IMR-90 (cell line): ENCODE measurements at regions of chr5 and their contacts with region 1.

Region 1: DNA sequence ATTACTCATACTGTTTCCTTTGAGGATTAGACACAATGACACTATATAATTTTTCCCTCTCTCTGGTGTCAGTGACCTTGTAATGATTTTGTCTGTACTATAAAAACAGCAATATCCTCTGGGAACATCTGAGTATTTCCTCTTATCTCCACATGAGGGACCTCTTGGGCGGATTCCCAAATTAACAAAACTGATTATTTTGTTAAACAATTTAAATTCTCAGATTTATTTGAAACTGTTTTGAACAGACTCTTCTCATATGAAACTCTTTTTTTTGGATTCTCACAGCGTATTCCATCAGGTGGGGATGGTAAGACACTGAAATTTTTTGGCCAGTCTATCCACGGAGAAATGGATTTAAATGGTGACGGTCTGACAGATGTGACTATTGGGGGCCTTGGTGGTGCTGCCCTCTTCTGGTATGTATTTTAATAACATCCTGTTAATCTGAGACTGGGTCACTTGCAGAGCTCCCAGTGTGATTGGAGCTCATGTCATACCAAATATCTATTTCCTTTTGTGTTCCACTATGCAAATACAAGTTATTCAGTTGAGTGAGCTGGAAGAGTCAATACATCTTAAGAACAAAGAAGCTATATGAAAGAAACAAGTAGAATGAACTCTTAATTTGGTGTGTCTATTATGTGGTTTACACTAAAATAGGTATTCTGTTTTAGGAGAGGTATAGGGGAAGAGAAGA is 73.8 kb upstream of the ITGA2 start:
- DNase-seq: peak; percentile 75
- ATAC-seq: peak; percentile 96
- H3K4me3 ChIP-seq: peak overlapping the region; percentile 10; the same call in 1 of the 2 replicates
- H3K27ac ChIP-seq: no peak overlapping the region
- H3K4me1 ChIP-seq: no peaks in the 10 kb centered on the region; the same call in 1 of the 2 replicates
- H3K27me3 ChIP-seq: no peaks in the 10 kb centered on the region
- CTCF ChIP-seq: peak; percentile 63
- POLR2A ChIP-seq: no peak
- RAD21 ChIP-seq: peak; percentile 70

Region 2: DNA sequence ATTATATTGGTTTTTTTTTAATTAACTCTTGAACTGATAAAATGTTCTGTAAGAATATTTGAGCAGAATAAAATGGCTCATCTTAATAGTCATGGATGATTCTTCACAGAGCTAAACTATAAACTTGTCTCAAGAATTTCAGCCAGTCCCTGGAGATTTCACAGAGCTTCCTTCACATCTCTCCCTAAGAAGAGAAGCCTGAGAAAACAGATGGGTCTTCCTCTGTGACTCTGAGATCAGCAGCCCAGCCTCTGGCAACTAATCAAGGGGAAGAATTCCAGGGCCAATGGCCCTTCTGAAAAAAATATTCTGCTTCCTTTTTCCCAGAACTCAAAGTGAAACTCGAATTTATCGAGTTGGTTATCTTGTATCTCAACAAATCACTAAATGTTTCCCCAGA is 249.8 kb before region 1 on chr5:
- CTCF ChIA-PET with region 1: interaction called, 4 read pairs
- POLR2A ChIA-PET with region 1: no interaction called
- dilution Hi-C with region 1: no loop called
- in situ Hi-C with region 1: no loop called
- intact Hi-C with region 1: loop called (anchors 2 kb)
- DNase-seq: peak; percentile 1
- ATAC-seq: no peak
- H3K4me3 ChIP-seq: no peak overlapping the region
- H3K27ac ChIP-seq: no peak overlapping the region
- H3K4me1 ChIP-seq: no peaks in the 10 kb centered on the region
- H3K27me3 ChIP-seq: peaks cover 2% of the 10 kb centered on the region
- CTCF ChIP-seq: no peak
- POLR2A ChIP-seq: no peak
- RAD21 ChIP-seq: no peak